Vagina (tissue), 2 donors: ENCODE measurements at regions of chr7 and their contacts with region 1.

Region 1: DNA sequence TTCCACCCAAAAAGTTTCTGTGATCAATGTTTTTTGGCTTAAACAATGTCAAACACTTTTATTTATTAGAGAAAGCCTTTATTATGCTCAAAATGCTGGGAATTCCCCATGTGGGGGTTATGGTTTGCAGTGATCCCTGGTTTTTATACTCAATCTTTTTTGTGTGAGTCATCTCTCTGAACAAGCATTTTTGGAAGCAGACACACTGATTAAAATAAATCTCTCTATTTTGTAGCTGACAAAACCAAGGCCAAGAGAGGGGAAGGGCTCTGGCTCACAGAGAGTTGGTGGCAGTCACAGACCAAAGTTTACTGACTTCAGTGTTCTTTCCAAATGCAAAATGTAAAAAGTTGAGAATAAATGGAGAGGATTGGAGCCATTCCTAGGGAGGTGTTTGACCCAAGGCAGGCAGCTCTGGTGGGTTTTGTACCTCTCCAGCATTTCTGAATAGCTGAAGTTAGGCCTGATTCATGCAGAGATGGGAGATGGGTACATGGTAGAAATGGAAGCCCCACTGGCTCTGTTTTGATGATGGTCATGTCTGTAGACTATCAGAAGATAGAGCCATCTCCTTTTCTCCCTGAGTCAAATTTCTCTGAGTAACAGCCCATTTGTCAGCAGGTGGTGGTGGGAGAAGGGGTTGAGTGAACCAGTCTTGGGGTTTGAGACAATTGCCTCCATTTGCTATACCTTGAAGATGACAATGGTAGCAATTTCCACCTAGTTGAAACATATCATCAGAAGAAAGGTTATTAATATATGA is 45.4 kb upstream of the NAMPT start:
- DNase-seq: no peak
- H3K4me3 ChIP-seq: no peak overlapping the region
- H3K27ac ChIP-seq: no peak overlapping the region
- H3K4me1 ChIP-seq: peaks cover 19% of the 10 kb centered on the region
- H3K27me3 ChIP-seq: no peaks in the 10 kb centered on the region
- CTCF ChIP-seq: no peak
- POLR2A ChIP-seq: no peak

Region 2: GRCh38 chr7:107652642-107653041 is 1322.5 kb after region 1 on chr7:
- intact Hi-C with region 1: loop called (anchors 5 kb)
- DNase-seq: no peak
- H3K4me3 ChIP-seq: no peak overlapping the region
- H3K27ac ChIP-seq: no peak overlapping the region
- H3K4me1 ChIP-seq: no peaks in the 10 kb centered on the region
- H3K27me3 ChIP-seq: no peaks in the 10 kb centered on the region
- CTCF ChIP-seq: no peak
- POLR2A ChIP-seq: no peak